ENCODE measurements at regions of chr9 and their contacts with region 1.

Region 1: DNA sequence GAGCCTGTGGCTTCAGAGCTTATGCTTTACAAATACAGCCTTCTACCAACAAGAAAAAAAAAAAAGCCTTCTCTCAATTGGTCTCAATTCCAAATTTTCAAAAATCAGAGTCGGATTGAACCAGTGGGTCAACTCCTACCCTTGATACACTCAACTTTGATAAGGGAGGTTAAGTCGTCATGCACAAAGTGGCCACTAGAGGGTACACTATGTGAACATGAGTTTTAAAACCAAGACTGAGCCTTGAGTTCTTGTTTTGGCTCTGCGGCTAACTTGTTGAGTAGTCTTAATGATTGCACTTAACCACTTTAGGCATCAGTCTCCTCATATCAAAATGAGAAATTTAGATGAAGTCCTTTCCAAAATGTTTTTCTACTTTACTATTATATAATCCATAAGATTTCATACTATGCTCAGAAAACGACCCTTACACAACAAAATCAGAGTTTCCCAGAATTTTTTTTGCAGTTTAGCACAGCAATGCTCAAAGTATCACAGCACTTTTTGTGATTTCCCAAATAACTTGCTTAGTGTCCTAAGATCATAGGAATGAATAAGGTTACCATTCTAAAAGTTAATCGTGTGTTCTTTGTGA is 92.9 kb upstream of the MTAP start:
- DNase-seq: peak; percentile 35 to 75 (median 65)
- ATAC-seq: peak; percentile 81
- H3K4me3 ChIP-seq: no peak overlapping the region
- H3K4me3 Mint-ChIP-seq: no peak overlapping the region
- H3K27ac ChIP-seq: no peak overlapping the region
- H3K27ac Mint-ChIP-seq: no peak overlapping the region
- H3K4me1 ChIP-seq: no peaks in the 10 kb centered on the region
- H3K4me1 Mint-ChIP-seq: peaks cover 20% of the 10 kb centered on the region
- H3K27me3 ChIP-seq: no peaks in the 10 kb centered on the region
- H3K27me3 Mint-ChIP-seq: no peaks in the 10 kb centered on the region
- CTCF ChIP-seq: peak; percentile 84

Region 2: GRCh38 chr9:21465859-21466518 is 243.6 kb before region 1 on chr9:
- CTCF ChIA-PET with region 1: interaction called, 30 read pairs
- POLR2A ChIA-PET with region 1: no interaction called
- intact Hi-C with region 1: loop called in 1 of 2 experiments (anchors 1 kb)
- DNase-seq: peak in 2 of 9 experiments; percentile 68 to 75
- ATAC-seq: peak; percentile 77
- H3K4me3 ChIP-seq: no peak overlapping the region
- H3K4me3 Mint-ChIP-seq: no peak overlapping the region
- H3K27ac ChIP-seq: no peak overlapping the region
- H3K27ac Mint-ChIP-seq: no peak overlapping the region
- H3K4me1 ChIP-seq: no peaks in the 10 kb centered on the region
- H3K4me1 Mint-ChIP-seq: peaks cover 2% of the 10 kb centered on the region
- H3K27me3 ChIP-seq: no peaks in the 10 kb centered on the region
- H3K27me3 Mint-ChIP-seq: no peaks in the 10 kb centered on the region
- CTCF ChIP-seq: peak; percentile 71

Region 3: DNA sequence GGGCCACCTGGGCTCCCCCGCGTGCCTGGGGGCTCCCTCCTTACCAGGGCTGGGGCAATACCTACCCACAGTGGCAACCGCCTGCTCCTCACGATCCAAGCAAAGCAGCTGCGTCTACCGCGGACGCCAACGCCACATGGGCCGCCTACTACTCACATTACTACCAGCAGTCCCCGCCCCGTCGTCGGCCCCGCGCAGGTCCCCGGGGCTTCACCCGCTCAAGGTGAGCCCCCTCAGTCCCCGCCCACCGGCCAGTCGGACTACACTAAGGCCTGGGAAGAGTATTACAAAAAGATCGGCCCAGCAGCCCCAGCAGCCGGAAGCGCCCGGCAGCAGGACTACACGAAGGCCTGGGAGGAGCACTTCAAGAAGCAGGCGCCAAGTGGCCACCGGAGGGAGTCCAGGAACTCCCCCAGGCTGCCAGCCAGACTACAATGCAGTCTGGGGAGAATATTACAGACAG is 13.1 kb before region 1 on chr9:
- CTCF ChIA-PET with region 1: interaction called, 10 read pairs
- POLR2A ChIA-PET with region 1: no interaction called
- intact Hi-C with region 1: no loop called
- DNase-seq: no peak
- ATAC-seq: no peak
- H3K4me3 ChIP-seq: no peak overlapping the region
- H3K4me3 Mint-ChIP-seq: no peak overlapping the region
- H3K27ac ChIP-seq: no peak overlapping the region
- H3K27ac Mint-ChIP-seq: no peak overlapping the region
- H3K4me1 ChIP-seq: no peaks in the 10 kb centered on the region
- H3K4me1 Mint-ChIP-seq: no peaks in the 10 kb centered on the region
- H3K27me3 ChIP-seq: no peaks in the 10 kb centered on the region
- H3K27me3 Mint-ChIP-seq: no peaks in the 10 kb centered on the region
- CTCF ChIP-seq: no peak

Region 4: GRCh38 chr9:21720758-21721157 is 11.2 kb after region 1 on chr9:
- CTCF ChIA-PET with region 1: interaction called, 10 read pairs
- POLR2A ChIA-PET with region 1: no interaction called
- intact Hi-C with region 1: no loop called
- DNase-seq: no peak
- ATAC-seq: no peak
- H3K4me3 ChIP-seq: no peak overlapping the region
- H3K4me3 Mint-ChIP-seq: no peak overlapping the region
- H3K27ac ChIP-seq: no peak overlapping the region
- H3K27ac Mint-ChIP-seq: no peak overlapping the region
- H3K4me1 ChIP-seq: no peaks in the 10 kb centered on the region
- H3K4me1 Mint-ChIP-seq: no peaks in the 10 kb centered on the region
- H3K27me3 ChIP-seq: no peaks in the 10 kb centered on the region
- H3K27me3 Mint-ChIP-seq: peaks cover 20% of the 10 kb centered on the region
- CTCF ChIP-seq: no peak

Region 5: DNA sequence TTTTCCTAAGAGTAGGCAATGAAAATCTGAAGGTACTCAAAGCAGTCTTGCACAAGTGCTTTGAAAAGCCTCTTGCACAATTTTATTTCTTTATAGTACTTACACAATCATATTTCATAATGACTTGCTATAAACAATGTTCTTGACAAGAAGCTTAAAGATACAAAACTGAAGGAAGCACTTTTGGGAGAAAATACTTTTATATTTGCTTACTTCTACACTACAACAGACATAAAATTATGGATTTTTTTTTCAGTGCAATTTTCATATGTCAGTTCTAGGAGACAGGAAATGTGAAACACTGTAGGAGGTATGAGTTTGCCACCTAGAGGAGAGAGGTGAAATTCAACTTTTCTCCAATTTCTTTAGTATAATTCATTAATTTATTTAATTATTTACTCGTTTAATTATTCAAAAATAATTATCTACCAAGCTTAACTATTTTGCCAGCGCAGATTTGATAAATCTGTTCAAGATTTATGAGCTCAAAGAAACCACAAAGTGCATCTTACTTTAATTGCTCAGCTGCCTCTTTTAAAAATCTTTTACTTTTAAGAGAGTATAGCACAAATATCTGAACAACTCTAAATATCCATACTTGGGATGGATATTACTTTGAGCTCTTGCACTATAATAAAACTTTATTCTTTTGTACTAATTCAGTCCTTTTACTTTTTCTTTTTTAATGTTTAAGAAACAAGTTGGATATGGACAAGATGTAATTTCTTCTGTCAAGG is 328.6 kb after region 1 on chr9:
- CTCF ChIA-PET with region 1: no interaction called
- POLR2A ChIA-PET with region 1: no interaction called
- intact Hi-C with region 1: loop called in 1 of 2 experiments (anchors 10 kb)
- DNase-seq: peak in 2 of 9 experiments; percentile 35 to 56
- ATAC-seq: peak; percentile 51
- H3K4me3 ChIP-seq: no peak overlapping the region
- H3K4me3 Mint-ChIP-seq: no peak overlapping the region
- H3K27ac ChIP-seq: no peak overlapping the region
- H3K27ac Mint-ChIP-seq: no peak overlapping the region
- H3K4me1 ChIP-seq: no peaks in the 10 kb centered on the region
- H3K4me1 Mint-ChIP-seq: no peaks in the 10 kb centered on the region
- H3K27me3 ChIP-seq: no peaks in the 10 kb centered on the region
- H3K27me3 Mint-ChIP-seq: no peaks in the 10 kb centered on the region
- CTCF ChIP-seq: peak; percentile 58

Region 6: DNA sequence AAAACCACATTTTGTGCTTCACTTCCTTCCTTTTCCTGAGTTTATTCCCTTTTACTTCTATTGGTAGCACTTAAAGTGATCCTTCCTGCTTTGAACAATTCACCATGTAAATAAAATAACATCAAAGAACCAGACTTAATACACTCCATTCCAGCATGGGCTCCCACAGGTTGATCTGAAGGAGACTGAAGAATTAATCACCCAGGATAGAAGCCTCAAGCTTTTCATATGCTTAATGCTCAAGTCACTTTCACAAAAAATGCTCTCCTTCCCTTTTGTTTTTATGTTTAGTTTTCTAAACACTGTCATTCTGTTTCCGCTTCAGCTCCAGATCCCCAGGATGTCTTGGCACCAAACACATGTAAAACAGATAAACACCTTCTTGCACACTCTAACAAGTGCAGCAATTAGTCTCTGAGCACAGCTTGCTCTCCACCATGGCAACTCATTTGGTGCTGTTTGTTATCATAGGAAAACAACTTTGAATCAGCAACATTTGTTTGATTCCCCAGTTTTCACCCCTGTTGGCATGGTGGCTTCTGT is 774.0 kb after region 1 on chr9:
- CTCF ChIA-PET with region 1: no interaction called
- POLR2A ChIA-PET with region 1: no interaction called
- intact Hi-C with region 1: no loop called
- DNase-seq: no peak
- ATAC-seq: no peak
- H3K4me3 ChIP-seq: no peak overlapping the region
- H3K4me3 Mint-ChIP-seq: no peak overlapping the region
- H3K27ac ChIP-seq: no peak overlapping the region
- H3K27ac Mint-ChIP-seq: no peak overlapping the region
- H3K4me1 ChIP-seq: no peaks in the 10 kb centered on the region
- H3K4me1 Mint-ChIP-seq: no peaks in the 10 kb centered on the region
- H3K27me3 ChIP-seq: no peaks in the 10 kb centered on the region
- H3K27me3 Mint-ChIP-seq: no peaks in the 10 kb centered on the region
- CTCF ChIP-seq: no peak

Measured in CD8-positive, alpha-beta T cell (primary cell).